Activated CD8-positive, alpha-beta T cell treated with anti-CD3 and anti-CD28 coated beads for 36 hours (primary cell): ENCODE measurements at regions of chr4 and their contacts with region 1.

Region 1: DNA sequence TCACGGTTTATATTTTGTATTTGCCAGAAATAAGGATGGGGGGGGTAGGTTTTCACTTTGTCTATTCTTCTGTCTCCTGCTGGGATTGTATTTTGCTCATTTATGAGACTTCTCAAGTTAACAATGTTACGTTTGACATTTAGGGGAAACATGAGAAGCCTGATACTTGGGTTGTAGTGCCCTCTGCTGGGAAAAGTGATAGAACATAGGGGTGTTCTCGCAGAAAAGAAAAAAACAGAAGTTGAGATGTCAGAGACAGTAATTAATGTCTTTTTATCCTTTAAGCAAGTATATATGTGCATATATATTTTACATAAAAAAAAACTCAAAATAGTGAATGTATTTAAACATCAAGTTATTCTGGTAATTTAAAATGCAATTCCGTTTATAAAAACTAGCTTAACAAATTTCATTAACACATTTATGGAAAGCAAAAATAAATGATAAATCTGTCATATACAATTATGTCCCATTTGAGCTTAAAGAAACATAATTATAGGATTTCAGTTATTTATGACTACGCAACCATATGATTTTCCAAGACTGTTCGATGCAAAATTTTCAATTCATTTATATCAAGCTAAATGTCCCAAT is 46.0 kb upstream of the TMPRSS11F start:
- DNase-seq: peak; percentile 64
- ATAC-seq: peak; percentile 62
- H3K4me3 Mint-ChIP-seq: no peak overlapping the region
- H3K27ac Mint-ChIP-seq: no peak overlapping the region
- H3K4me1 Mint-ChIP-seq: peaks cover 2% of the 10 kb centered on the region
- H3K27me3 Mint-ChIP-seq: peaks cover 6% of the 10 kb centered on the region
- CTCF ChIP-seq: peak; percentile 71

Region 2: GRCh38 chr4:67983333-67983732 is 192.3 kb before region 1 on chr4:
- CTCF ChIA-PET with region 1: interaction called, 10 read pairs
- POLR2A ChIA-PET with region 1: no interaction called
- intact Hi-C with region 1: loop called (anchors 2 kb)
- DNase-seq: no peak
- ATAC-seq: no peak
- H3K4me3 Mint-ChIP-seq: no peak overlapping the region
- H3K27ac Mint-ChIP-seq: no peak overlapping the region
- H3K4me1 Mint-ChIP-seq: no peaks in the 10 kb centered on the region
- H3K27me3 Mint-ChIP-seq: peaks cover 6% of the 10 kb centered on the region
- CTCF ChIP-seq: no peak

Region 3: GRCh38 chr4:67988991-67989390 is 186.7 kb before region 1 on chr4:
- CTCF ChIA-PET with region 1: interaction called, 10 read pairs
- POLR2A ChIA-PET with region 1: no interaction called
- intact Hi-C with region 1: loop called (anchors 2 kb)
- DNase-seq: no peak
- ATAC-seq: no peak
- H3K4me3 Mint-ChIP-seq: no peak overlapping the region
- H3K27ac Mint-ChIP-seq: no peak overlapping the region
- H3K4me1 Mint-ChIP-seq: no peaks in the 10 kb centered on the region
- H3K27me3 Mint-ChIP-seq: peaks cover 6% of the 10 kb centered on the region
- CTCF ChIP-seq: no peak

Region 4: GRCh38 chr4:68038272-68038671 is 137.4 kb before region 1 on chr4:
- CTCF ChIA-PET with region 1: no interaction called
- POLR2A ChIA-PET with region 1: no interaction called
- intact Hi-C with region 1: no loop called
- DNase-seq: no peak
- ATAC-seq: no peak
- H3K4me3 Mint-ChIP-seq: no peak overlapping the region
- H3K27ac Mint-ChIP-seq: no peak overlapping the region
- H3K4me1 Mint-ChIP-seq: no peaks in the 10 kb centered on the region
- H3K27me3 Mint-ChIP-seq: no peaks in the 10 kb centered on the region
- CTCF ChIP-seq: no peak

Region 5: DNA sequence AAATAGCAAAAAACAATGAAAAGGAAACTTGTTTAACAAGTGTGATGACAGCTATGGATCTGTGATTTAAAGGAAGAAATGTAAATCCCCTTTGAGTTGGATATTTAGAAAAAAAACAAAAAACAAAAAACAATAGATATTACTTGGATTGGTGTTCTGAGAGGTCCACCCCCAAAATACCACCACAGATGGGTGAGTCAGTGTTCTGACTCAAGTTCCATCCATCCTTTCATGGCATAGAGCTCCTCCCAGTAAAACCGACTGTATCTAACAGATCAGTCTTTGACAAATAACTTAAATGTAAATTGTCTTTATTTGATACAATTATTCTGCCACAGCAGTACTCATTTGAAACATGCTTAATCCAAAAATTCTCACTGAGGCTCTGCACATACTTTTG is 42.4 kb after region 1 on chr4:
- CTCF ChIA-PET with region 1: no interaction called
- POLR2A ChIA-PET with region 1: no interaction called
- intact Hi-C with region 1: no loop called
- DNase-seq: no peak
- ATAC-seq: no peak
- H3K4me3 Mint-ChIP-seq: no peak overlapping the region
- H3K27ac Mint-ChIP-seq: no peak overlapping the region
- H3K4me1 Mint-ChIP-seq: no peaks in the 10 kb centered on the region
- H3K27me3 Mint-ChIP-seq: peaks cover 23% of the 10 kb centered on the region
- CTCF ChIP-seq: no peak

Region 6: DNA sequence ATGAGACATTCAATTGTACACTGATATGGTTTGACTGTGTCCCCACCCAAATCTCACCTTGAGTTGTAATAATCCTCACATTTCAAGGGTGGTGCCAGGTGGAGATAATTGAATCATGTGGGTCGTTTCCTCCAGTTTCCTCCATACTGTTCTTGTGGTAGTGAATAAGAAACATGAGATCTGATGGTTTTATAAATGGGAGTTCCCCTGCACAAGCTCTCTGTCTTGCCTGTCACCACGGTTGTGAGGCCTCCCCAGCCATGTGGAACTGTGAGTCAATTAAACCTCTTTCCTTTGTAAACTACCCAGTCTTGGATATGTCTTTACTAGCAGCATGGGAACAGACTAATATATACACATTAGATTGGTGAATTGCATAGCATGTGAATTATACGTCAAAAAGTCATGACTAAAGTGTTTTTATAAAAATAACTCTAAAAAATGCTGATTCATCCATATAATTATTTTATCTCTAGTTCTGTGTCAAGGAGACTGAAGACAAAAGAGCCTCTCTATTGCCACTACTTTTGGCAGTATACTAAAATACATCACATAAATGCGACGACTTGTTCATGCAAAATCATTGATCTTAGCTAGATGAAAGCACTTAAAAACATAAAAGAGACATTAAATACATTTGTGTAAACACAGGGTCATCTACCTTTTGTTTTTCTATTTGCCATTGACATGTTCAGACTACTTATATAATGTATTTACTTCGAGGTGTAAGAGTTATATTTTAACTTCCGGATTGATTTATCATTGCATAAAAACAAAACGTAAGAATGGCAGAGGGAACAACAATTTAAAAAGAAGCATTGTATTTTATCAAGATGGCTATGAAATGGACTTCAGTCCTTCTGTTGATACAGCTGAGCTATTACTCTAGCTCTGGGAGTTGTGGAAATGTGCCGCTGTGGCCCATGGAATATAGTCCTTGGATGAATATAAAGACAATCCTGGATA is 124.1 kb after region 1 on chr4:
- CTCF ChIA-PET with region 1: no interaction called
- POLR2A ChIA-PET with region 1: no interaction called
- intact Hi-C with region 1: no loop called
- DNase-seq: peak; percentile 51
- ATAC-seq: peak; percentile 87
- H3K4me3 Mint-ChIP-seq: no peak overlapping the region
- H3K27ac Mint-ChIP-seq: no peak overlapping the region
- H3K4me1 Mint-ChIP-seq: no peaks in the 10 kb centered on the region
- H3K27me3 Mint-ChIP-seq: peaks cover 11% of the 10 kb centered on the region
- CTCF ChIP-seq: no peak